ENCODE measurements at regions of chr2 and their contacts with region 1.

Region 1: GRCh38 chr2:152025678-152026287 is 73.1 kb downstream of the CACNB4 start:
- DNase-seq: peak; percentile 85
- H3K4me3 Mint-ChIP-seq: peak overlapping the region; percentile 74
- H3K27ac Mint-ChIP-seq: no peak overlapping the region
- H3K4me1 Mint-ChIP-seq: peaks cover 9% of the 10 kb centered on the region
- H3K27me3 Mint-ChIP-seq: peaks cover 6% of the 10 kb centered on the region

Region 2: GRCh38 chr2:151638191-151638933 is 387.4 kb before region 1 on chr2:
- CTCF ChIA-PET with region 1: interaction called, 11 read pairs
- DNase-seq: peak; percentile 58
- H3K4me3 Mint-ChIP-seq: peak overlapping the region; percentile 53
- H3K27ac Mint-ChIP-seq: peak overlapping the region; percentile 96
- H3K4me1 Mint-ChIP-seq: peaks cover 57% of the 10 kb centered on the region
- H3K27me3 Mint-ChIP-seq: no peaks in the 10 kb centered on the region

Region 3: GRCh38 chr2:151782378-151783132 is 243.2 kb before region 1 on chr2:
- CTCF ChIA-PET with region 1: no interaction called
- DNase-seq: no peak
- H3K4me3 Mint-ChIP-seq: no peak overlapping the region
- H3K27ac Mint-ChIP-seq: no peak overlapping the region
- H3K4me1 Mint-ChIP-seq: no peaks in the 10 kb centered on the region
- H3K27me3 Mint-ChIP-seq: no peaks in the 10 kb centered on the region

Region 4: GRCh38 chr2:151999053-151999452 is 26.7 kb before region 1 on chr2:
- CTCF ChIA-PET with region 1: interaction called, 20 read pairs
- DNase-seq: peak; percentile 55
- H3K4me3 Mint-ChIP-seq: no peak overlapping the region
- H3K27ac Mint-ChIP-seq: peak overlapping the region; percentile 64
- H3K4me1 Mint-ChIP-seq: no peaks in the 10 kb centered on the region
- H3K27me3 Mint-ChIP-seq: peaks cover 16% of the 10 kb centered on the region

Region 5: GRCh38 chr2:152005607-152006006 is 20.2 kb before region 1 on chr2:
- CTCF ChIA-PET with region 1: interaction called, 20 read pairs
- DNase-seq: no peak
- H3K4me3 Mint-ChIP-seq: no peak overlapping the region
- H3K27ac Mint-ChIP-seq: no peak overlapping the region
- H3K4me1 Mint-ChIP-seq: peaks cover 6% of the 10 kb centered on the region
- H3K27me3 Mint-ChIP-seq: peaks cover 8% of the 10 kb centered on the region

Region 6: DNA sequence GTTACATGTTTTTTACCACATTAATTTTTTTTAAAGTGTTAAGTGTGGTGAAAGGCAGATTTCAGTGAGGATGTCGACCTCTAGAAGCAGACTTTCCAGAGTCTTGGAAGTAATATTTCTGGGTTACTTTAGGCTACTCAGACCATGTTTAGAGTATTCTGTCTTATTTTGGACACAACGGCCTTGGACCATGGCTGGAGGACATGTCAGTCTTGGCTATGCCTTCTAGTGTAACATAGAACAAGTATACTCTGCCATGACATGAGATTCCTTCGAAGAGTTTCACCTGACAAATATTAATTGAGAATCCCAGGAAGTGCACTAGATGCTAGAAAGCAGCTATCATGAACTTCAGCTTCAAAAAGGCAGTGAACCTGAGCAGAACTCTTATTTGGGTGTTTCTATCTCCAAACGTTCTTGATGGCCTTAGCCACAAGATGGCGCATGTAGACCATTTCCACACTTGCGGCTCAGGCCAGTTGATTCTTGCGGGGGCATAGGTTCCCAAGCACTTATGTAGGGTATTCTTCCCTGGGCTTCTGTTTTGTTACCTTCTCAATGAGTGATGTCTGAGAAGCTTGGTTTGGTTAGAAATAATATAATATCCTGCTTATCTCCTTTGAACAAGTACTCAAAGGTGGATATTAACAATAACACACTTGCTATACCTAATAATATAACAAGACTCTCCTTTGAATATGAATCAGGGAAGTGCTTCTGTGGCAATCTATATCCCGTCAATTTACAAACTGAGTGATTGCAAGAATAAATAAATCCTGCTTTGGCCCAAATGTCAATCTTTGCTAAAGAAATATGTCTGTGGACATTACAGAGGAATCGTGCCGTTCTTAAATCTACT is 11.1 kb after region 1 on chr2:
- CTCF ChIA-PET with region 1: interaction called, 25 read pairs
- DNase-seq: peak; percentile 75
- H3K4me3 Mint-ChIP-seq: no peak overlapping the region
- H3K27ac Mint-ChIP-seq: no peak overlapping the region
- H3K4me1 Mint-ChIP-seq: no peaks in the 10 kb centered on the region
- H3K27me3 Mint-ChIP-seq: peaks cover under 1% of the 10 kb centered on the region

Region 7: DNA sequence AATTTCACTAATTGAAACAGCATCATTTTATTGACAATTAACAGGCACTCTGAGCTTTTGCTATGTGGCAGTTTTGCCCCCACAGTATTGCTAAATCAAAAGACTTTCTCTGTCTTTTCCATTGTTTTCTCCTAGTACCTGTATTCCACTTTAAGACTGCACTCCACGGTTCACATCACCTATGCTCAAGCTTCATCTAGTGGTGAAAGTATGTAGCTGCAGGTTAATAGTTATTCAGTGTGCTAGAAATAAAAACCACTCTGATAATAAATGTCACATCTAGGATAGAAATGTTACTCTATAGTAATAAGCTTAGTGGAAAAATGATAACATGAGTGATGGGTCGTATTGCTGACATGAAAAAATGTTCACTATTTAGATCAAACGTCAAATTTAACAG is 717.2 kb after region 1 on chr2:
- CTCF ChIA-PET with region 1: no interaction called
- DNase-seq: no peak
- H3K4me3 Mint-ChIP-seq: no peak overlapping the region
- H3K27ac Mint-ChIP-seq: no peak overlapping the region
- H3K4me1 Mint-ChIP-seq: no peaks in the 10 kb centered on the region
- H3K27me3 Mint-ChIP-seq: no peaks in the 10 kb centered on the region

Measured in activated naive CD4-positive, alpha-beta T cell treated with anti-CD3 and anti-CD28 coated beads, Interleukin-2, amount 10 ng/mL, durations not matched to agents 7 days and 5 days (primary cell).